ENCODE measurements at regions of chr1 and their contacts with region 1.

Region 1: GRCh38 chr1:21406659-21407058 is 33.3 kb upstream of the NBPF3 start:
- DNase-seq: no peak
- H3K4me3 ChIP-seq: no peak overlapping the region
- H3K27ac ChIP-seq: no peak overlapping the region
- H3K4me1 ChIP-seq: no peaks in the 10 kb centered on the region
- H3K27me3 ChIP-seq: no peaks in the 10 kb centered on the region
- CTCF ChIP-seq: no peak
- POLR2A ChIP-seq: no peak

Region 2: GRCh38 chr1:22259551-22260282 is 853.1 kb after region 1 on chr1:
- intact Hi-C with region 1: loop called (anchors 5 kb)
- DNase-seq: no peak
- H3K4me3 ChIP-seq: no peak overlapping the region
- H3K27ac ChIP-seq: peak overlapping the region; percentile 73 to 78
- H3K4me1 ChIP-seq: peaks cover 0 to 5% of the 10 kb centered on the region in 2 donors
- H3K27me3 ChIP-seq: no peaks in the 10 kb centered on the region
- CTCF ChIP-seq: no peak
- POLR2A ChIP-seq: no peak

Measured in breast epithelium (tissue), 4 donors.